Naive thymus-derived CD4-positive, alpha-beta T cell (primary cell): ENCODE measurements at regions of chr16 and their contacts with region 1.

Region 1: GRCh38 chr16:78353610-78354275 is 254.3 kb downstream of the WWOX start:
- DNase-seq: no peak
- ATAC-seq: no peak
- H3K4me3 ChIP-seq: no peak overlapping the region
- H3K4me3 Mint-ChIP-seq: no peak overlapping the region
- H3K27ac ChIP-seq: no peak overlapping the region
- H3K27ac Mint-ChIP-seq: no peak overlapping the region
- H3K4me1 ChIP-seq: no peaks in the 10 kb centered on the region
- H3K4me1 Mint-ChIP-seq: no peaks in the 10 kb centered on the region
- H3K27me3 ChIP-seq: no peaks in the 10 kb centered on the region
- H3K27me3 Mint-ChIP-seq: no peaks in the 10 kb centered on the region

Region 2: GRCh38 chr16:77816293-77816692 is 537.5 kb before region 1 on chr16:
- CTCF ChIA-PET with region 1: no interaction called
- POLR2A ChIA-PET with region 1: no interaction called
- intact Hi-C with region 1: no loop called
- DNase-seq: no peak
- ATAC-seq: no peak
- H3K4me3 ChIP-seq: no peak overlapping the region
- H3K4me3 Mint-ChIP-seq: no peak overlapping the region
- H3K27ac ChIP-seq: no peak overlapping the region
- H3K27ac Mint-ChIP-seq: no peak overlapping the region
- H3K4me1 ChIP-seq: no peaks in the 10 kb centered on the region
- H3K4me1 Mint-ChIP-seq: no peaks in the 10 kb centered on the region
- H3K27me3 ChIP-seq: no peaks in the 10 kb centered on the region
- H3K27me3 Mint-ChIP-seq: peaks cover 2 to 43% (median 12%) of the 10 kb centered on the region in 5 donors

Region 3: GRCh38 chr16:78333808-78334207 is 19.9 kb before region 1 on chr16:
- CTCF ChIA-PET with region 1: no interaction called
- POLR2A ChIA-PET with region 1: no interaction called
- intact Hi-C with region 1: loop called in 1 of 2 experiments (anchors 1 kb)
- DNase-seq: no peak
- ATAC-seq: no peak
- H3K4me3 ChIP-seq: no peak overlapping the region
- H3K4me3 Mint-ChIP-seq: no peak overlapping the region
- H3K27ac ChIP-seq: no peak overlapping the region
- H3K27ac Mint-ChIP-seq: no peak overlapping the region
- H3K4me1 ChIP-seq: no peaks in the 10 kb centered on the region
- H3K4me1 Mint-ChIP-seq: no peaks in the 10 kb centered on the region
- H3K27me3 ChIP-seq: no peaks in the 10 kb centered on the region
- H3K27me3 Mint-ChIP-seq: no peaks in the 10 kb centered on the region